CD14-positive monocyte (primary cell): ENCODE measurements at regions of chr6 and their contacts with region 1.

Region 1: GRCh38 chr6:111483736-111484632 is 966 bp upstream of the REV3L start:
- DNase-seq: peak; percentile 68 to 88 (median 80)
- H3K4me3 ChIP-seq: peak overlapping the region; percentile 85 to 91 (median 90)
- H3K4me3 Mint-ChIP-seq: peak overlapping the region; percentile 97 to 99
- H3K27ac ChIP-seq: peak overlapping the region; percentile 96 to 99
- H3K27ac Mint-ChIP-seq: peak overlapping the region; percentile 98 to 99 (median 99)
- H3K4me1 ChIP-seq: peaks cover 27 to 40% of the 10 kb centered on the region in 2 donors
- H3K4me1 Mint-ChIP-seq: peaks cover 33% of the 10 kb centered on the region
- H3K27me3 ChIP-seq: no peaks in the 10 kb centered on the region
- H3K27me3 Mint-ChIP-seq: no peaks in the 10 kb centered on the region
- CTCF ChIP-seq: no peak

Region 2: GRCh38 chr6:110873981-110874879 is 609.8 kb before region 1 on chr6 and contains the start of gene AMD1:
- intact Hi-C with region 1: loop called in 1 of 2 experiments (anchors 10 kb)
- DNase-seq: peak; percentile 97 to 99 (median 98)
- H3K4me3 ChIP-seq: peak within 1 kb of the TSS; percentile 92 to 98 (median 94)
- H3K4me3 Mint-ChIP-seq: peak within 1 kb of the TSS; percentile 96 to 100
- H3K27ac ChIP-seq: peak within 1 kb of the TSS; percentile 93 to 96
- H3K27ac Mint-ChIP-seq: peak within 1 kb of the TSS; percentile 96 to 99 (median 98)
- H3K4me1 ChIP-seq: peaks cover 28 to 35% of the 10 kb centered on the region in 2 donors
- H3K4me1 Mint-ChIP-seq: peaks cover 24% of the 10 kb centered on the region
- H3K27me3 ChIP-seq: no peaks in the 10 kb centered on the region
- H3K27me3 Mint-ChIP-seq: no peaks in the 10 kb centered on the region
- CTCF ChIP-seq: no peak
- polyA plus RNA-seq, gene AMD1: 35.0 to 60.5 (median 45.3) TPM

Region 3: DNA sequence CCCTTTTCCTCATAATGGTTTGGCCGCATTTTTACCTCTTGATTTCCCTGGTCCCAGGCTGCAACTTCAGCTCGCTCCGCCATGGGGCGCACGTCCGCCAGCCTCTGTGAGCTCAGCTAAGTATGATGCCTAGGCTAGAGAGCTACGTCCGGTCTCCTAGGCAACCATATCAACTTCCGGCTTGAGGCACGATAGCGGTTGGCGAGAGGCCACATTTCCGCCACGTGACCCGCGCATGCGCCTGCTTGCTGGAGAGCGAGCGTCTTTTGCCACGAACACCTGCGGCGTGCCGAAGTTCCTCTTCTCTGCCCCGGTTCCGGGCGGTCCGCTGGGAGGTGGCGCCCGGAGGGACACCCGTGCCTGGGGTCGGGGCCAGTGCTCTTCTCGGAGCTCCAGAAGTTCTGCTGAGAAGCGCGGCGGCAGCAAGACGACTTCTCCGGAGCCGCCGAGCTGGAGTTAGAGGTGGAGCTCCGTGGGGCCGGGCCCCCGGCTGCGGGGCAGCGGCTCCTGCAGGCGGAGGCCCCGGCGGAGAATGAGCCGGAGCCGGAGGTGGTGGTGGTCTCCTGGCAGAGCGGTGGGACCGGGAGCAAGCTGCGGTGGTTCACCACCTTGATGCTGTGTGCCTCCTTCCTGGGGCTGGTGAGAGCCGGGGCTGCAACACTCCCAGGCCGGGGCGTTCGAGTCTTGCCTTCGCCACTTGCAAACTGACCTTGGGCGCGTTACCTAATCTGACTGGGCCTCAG is 224.7 kb before region 1 on chr6:
- intact Hi-C with region 1: loop called (anchors 2 to 5 kb)
- DNase-seq: peak; percentile 100
- H3K4me3 ChIP-seq: peak overlapping the region; percentile 45 to 76 (median 64)
- H3K4me3 Mint-ChIP-seq: peak overlapping the region; percentile 74 to 76
- H3K27ac ChIP-seq: peak overlapping the region; percentile 84 to 97
- H3K27ac Mint-ChIP-seq: peak overlapping the region; percentile 84 to 91 (median 88)
- H3K4me1 ChIP-seq: peaks cover 18 to 22% of the 10 kb centered on the region in 2 donors
- H3K4me1 Mint-ChIP-seq: peaks cover 22% of the 10 kb centered on the region
- H3K27me3 ChIP-seq: no peaks in the 10 kb centered on the region
- H3K27me3 Mint-ChIP-seq: peaks cover 6 to 10% (median 8%) of the 10 kb centered on the region in 3 donors
- CTCF ChIP-seq: peak; percentile 89

Region 4: DNA sequence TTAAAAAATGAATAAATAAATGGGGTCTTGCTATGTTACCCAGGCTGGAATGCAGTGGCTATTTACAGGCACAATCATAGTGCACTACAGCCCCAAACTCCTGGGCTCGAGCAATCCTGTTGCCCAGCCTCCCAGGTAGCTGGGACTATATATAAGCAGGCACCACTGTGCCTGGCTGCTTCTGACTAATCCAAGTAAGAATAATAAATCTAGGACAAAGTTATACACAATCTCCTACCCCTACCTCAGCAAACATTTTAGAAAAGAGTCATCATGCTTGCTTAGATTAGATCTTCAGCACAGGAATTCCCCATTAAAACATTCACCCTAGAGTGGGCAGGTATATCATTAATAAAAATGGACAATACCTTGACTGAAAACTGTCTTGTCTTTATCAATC is 125.5 kb before region 1 on chr6:
- intact Hi-C with region 1: loop called in 1 of 2 experiments (anchors 5 kb)
- DNase-seq: no peak
- H3K4me3 ChIP-seq: no peak overlapping the region
- H3K4me3 Mint-ChIP-seq: no peak overlapping the region
- H3K27ac ChIP-seq: no peak overlapping the region
- H3K27ac Mint-ChIP-seq: no peak overlapping the region
- H3K4me1 ChIP-seq: peaks cover 19 to 24% of the 10 kb centered on the region in 2 donors
- H3K4me1 Mint-ChIP-seq: peaks cover 19% of the 10 kb centered on the region
- H3K27me3 ChIP-seq: no peaks in the 10 kb centered on the region
- H3K27me3 Mint-ChIP-seq: no peaks in the 10 kb centered on the region
- CTCF ChIP-seq: no peak

Region 5: GRCh38 chr6:111406200-111406721 is 77.7 kb before region 1 on chr6:
- intact Hi-C with region 1: loop called (anchors 5 kb)
- DNase-seq: peak; percentile 93 to 98 (median 97)
- H3K4me3 ChIP-seq: peak overlapping the region in 1 of 3 experiments; percentile 25
- H3K4me3 Mint-ChIP-seq: peak overlapping the region in 1 of 2 donors; percentile 75
- H3K27ac ChIP-seq: peak overlapping the region; percentile 94 to 98
- H3K27ac Mint-ChIP-seq: peak overlapping the region; percentile 96 to 100 (median 99)
- H3K4me1 ChIP-seq: peaks cover 43 to 50% of the 10 kb centered on the region in 2 donors
- H3K4me1 Mint-ChIP-seq: peaks cover 37% of the 10 kb centered on the region
- H3K27me3 ChIP-seq: no peaks in the 10 kb centered on the region
- H3K27me3 Mint-ChIP-seq: no peaks in the 10 kb centered on the region
- CTCF ChIP-seq: no peak

Region 6: DNA sequence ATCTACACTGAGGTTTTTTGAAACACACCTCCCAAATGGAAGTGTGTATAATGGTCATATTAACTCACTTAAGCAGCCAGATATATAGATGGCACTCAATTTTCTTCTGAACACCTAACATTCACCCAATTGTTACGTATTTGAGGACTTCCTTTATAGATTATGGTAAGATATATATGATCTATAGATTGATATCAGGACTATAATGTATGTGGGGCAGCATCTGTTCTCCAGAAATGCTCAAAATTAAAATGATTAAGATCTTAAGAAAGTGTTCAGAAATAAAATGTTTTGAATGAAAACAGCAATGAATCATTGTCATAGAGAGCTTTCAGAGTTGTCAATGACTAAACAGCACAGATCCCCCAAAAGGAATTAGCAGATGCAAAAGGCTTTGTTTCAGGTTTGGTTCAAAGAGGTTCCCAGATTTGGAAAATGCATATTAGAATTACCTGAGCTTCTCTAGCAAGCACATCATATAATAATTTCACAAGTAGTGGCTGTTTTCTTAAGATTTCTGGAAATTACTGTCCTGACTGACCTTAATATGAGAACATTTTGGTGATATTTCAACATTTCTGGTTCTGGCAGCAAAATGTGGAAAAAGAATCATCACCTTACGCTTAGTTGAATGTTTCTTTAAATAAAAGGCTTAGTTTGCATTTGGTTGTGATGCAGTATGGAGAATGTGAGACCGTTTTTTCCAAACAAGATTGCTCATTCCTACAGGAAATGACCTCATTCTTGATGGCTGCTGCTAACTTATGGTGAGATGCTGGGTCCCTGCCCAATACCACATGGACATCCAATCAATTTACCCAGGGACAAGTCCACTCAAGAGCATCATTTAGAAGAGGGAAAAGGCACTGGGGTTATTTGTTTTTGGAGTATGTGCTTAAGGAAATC is 90.2 kb after region 1 on chr6:
- intact Hi-C with region 1: loop called in 1 of 2 experiments (anchors 10 kb)
- DNase-seq: peak; percentile 33 to 66 (median 46)
- H3K4me3 ChIP-seq: no peak overlapping the region
- H3K4me3 Mint-ChIP-seq: no peak overlapping the region
- H3K27ac ChIP-seq: peak overlapping the region in 1 of 2 donors; percentile 91
- H3K27ac Mint-ChIP-seq: peak overlapping the region; percentile 51 to 97 (median 95)
- H3K4me1 ChIP-seq: peaks cover 24 to 29% of the 10 kb centered on the region in 2 donors
- H3K4me1 Mint-ChIP-seq: peaks cover 32% of the 10 kb centered on the region
- H3K27me3 ChIP-seq: no peaks in the 10 kb centered on the region
- H3K27me3 Mint-ChIP-seq: no peaks in the 10 kb centered on the region
- CTCF ChIP-seq: no peak

Region 7: GRCh38 chr6:111605100-111605751 is 121.2 kb after region 1 on chr6:
- intact Hi-C with region 1: loop called in 1 of 2 experiments (anchors 5 kb)
- DNase-seq: peak; percentile 72 to 85 (median 81)
- H3K4me3 ChIP-seq: peak overlapping the region; percentile 42 to 87 (median 81)
- H3K4me3 Mint-ChIP-seq: peak overlapping the region; percentile 89 to 98
- H3K27ac ChIP-seq: peak overlapping the region; percentile 85 to 96
- H3K27ac Mint-ChIP-seq: peak overlapping the region; percentile 93 to 99 (median 98)
- H3K4me1 ChIP-seq: peaks cover 47 to 50% of the 10 kb centered on the region in 2 donors
- H3K4me1 Mint-ChIP-seq: peaks cover 53% of the 10 kb centered on the region
- H3K27me3 ChIP-seq: no peaks in the 10 kb centered on the region
- H3K27me3 Mint-ChIP-seq: peaks cover 0 to 2% (median 0%) of the 10 kb centered on the region in 3 donors
- CTCF ChIP-seq: no peak